OCI-LY7 (cell line): ENCODE measurements at regions of chr4 and their contacts with region 1.

Region 1: DNA sequence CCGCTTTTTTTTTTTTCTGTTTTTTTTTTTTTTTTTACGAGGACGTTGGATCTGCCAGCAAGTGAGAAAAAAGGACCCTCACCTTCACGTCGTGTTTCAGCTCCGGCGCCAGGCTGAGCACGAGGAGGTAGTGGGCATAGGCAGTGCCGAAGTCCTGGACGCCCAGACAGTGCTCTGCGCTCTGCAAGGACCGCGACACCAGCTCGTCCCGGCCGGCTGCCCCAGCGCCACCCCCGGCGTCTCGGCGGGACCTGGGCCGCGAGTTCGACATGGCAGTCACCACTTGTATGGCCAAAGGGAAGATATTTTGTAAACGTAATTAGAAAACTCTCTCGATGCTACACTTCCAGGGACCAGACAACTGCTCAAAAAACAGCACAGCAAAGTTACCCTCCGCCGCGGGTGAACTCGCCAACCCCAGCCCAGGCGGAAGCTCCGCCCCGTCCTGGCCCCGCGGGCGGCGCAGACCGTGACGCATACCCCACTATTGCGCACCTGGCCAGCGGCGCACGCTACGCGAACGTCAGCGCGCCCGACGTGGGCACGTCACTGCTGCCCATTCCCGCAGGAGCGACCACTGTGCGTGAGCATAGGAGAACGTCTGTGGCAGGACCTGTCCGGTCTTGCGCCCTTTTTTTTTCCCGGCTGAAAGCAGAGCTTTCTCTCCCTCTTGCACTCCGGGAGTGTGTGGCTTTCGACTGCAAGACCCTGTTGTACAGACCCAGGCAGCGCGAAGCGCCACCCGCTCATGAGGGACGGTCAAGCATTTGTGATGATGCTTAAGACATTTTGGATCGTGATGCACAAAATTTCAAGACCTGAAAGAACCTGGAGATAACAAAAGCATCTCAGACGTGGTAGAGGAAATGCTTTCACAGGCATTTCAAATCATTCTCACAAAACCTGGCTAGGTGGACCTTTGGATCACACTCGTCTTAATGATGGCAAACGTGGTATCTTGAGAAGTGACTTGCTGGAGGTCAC is at the start of gene PRMT9:
- DNase-seq: peak; percentile 90
- H3K4me3 ChIP-seq: peak within 1 kb of the TSS; percentile 75
- H3K27ac ChIP-seq: peak within 1 kb of the TSS; percentile 80
- H3K4me1 ChIP-seq: peaks cover 14% of the 10 kb centered on the region
- CTCF ChIP-seq: no peak
- total RNA-seq, gene PRMT9: 12.1 and 13.1 TPM in 2 replicates

Region 2: DNA sequence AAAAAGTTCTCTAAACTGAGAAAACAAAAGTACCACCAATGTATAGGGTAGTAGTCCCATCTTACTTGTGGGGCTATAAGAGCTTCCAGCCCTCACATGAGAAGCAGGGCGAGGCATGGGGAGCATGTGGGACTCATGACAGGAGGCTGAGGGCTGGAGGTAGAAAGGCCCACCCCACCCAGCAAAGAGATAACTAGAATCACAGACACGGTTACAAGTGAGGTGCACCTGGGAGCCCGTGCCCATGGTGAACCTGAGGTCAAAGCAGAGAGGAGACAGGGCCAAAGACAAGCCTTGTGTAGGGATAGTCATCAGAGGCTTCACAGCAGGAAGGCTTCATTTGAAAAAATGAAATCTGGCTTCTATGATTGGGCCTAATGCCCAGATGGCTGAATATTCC is 793.7 kb before region 1 on chr4:
- CTCF ChIA-PET with region 1: no interaction called
- POLR2A ChIA-PET with region 1: no interaction called
- intact Hi-C with region 1: no loop called
- DNase-seq: no peak
- H3K4me3 ChIP-seq: no peak overlapping the region
- H3K27ac ChIP-seq: no peak overlapping the region
- H3K4me1 ChIP-seq: no peaks in the 10 kb centered on the region
- CTCF ChIP-seq: no peak

Region 3: DNA sequence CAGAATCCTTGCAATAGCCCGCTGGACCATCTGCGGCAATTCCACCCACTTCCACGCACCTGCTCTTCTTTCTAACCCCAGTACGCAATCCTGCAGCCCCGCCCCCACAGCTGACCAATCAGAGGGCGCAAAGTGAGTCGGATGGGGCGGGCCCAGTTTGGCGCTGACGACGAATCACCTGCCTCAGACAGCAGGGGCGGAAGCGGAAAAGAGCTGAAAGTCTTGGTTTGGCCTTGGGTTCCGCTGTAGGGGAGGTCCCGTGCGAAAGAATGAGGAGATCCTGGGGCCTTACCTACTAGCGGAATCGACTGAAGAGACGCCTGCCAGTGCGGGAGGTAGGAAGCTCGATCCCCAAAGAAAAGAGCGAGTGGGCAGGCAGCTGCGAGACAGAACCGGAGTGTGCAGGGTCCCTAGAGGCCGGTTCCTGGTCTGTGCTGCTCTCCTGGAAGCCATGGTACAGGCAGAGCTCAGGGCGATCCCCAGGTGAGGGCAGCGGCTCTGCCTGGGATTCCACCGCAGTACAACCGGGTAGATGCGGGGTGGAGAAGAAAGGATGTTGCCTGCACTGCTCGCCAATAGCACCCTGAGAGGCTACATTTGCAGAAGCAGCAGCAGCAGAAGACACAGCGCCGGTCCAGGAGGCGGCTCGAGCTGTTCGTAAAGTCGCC is 66.7 kb before region 1 on chr4 and contains the start of gene TMEM184C:
- CTCF ChIA-PET with region 1: no interaction called
- POLR2A ChIA-PET with region 1: interaction called, 19 read pairs
- intact Hi-C with region 1: loop called (anchors 1 kb)
- DNase-seq: peak; percentile 96
- H3K4me3 ChIP-seq: peak within 1 kb of the TSS; percentile 77
- H3K27ac ChIP-seq: peak within 1 kb of the TSS; percentile 76
- H3K4me1 ChIP-seq: peaks cover 23% of the 10 kb centered on the region
- CTCF ChIP-seq: no peak
- total RNA-seq, gene TMEM184C: 15.8 and 16.4 TPM in 2 replicates

Region 4: DNA sequence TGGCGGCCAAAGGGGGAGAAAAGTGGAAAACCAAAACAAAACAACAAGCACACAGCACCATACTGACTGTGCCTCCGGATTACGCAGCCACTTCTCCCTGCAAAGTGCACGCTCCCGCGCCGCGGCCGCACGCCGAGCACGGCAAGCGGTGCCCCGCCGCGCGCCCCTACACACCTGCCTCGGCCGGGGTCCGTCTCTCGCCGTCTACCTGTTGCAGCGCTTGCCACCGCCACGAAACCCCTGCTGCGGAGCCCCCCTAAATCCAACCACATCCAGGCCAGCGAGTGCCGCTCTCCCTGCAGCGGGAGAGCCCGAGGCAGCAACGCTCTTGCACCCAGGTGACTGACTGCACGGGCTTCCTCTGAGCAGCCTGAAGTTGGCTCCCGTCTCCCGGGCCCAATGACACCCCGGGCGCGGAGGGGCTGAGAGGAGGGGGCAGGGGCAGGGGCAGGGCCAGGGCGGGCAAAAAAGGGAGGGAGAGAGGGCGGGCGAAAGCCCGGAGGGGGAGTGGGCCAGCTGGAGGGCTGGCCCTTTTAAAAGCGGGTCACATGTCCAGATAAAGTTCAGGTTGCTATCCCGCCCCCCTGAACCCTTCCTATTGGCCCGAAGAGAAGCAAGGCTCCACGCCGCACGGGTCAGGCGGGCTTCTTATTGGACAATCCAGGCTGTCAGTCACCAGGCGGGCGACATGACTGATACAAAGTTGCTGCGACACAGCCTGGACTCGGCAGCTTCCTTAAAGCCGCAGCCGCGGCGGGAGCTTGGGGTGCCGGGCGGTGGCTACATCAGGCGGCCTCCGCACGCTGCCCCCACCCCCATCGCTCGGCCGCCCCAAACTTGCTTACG is 758.2 kb after region 1 on chr4 and contains the start of gene NR3C2:
- CTCF ChIA-PET with region 1: no interaction called
- POLR2A ChIA-PET with region 1: no interaction called
- intact Hi-C with region 1: loop called (anchors 5 kb)
- DNase-seq: peak; percentile 98
- H3K4me3 ChIP-seq: peak within 1 kb of the TSS; percentile 82
- H3K27ac ChIP-seq: peak within 1 kb of the TSS; percentile 17
- H3K4me1 ChIP-seq: peaks cover 14% of the 10 kb centered on the region
- CTCF ChIP-seq: no peak
- total RNA-seq, gene NR3C2: 2.7 and 5.2 TPM in 2 replicates